HCT116 (cell line): ENCODE measurements at regions of chr7 and their contacts with region 1.

Region 1: GRCh38 chr7:75866489-75867389 is 12.1 kb upstream of the RHBDD2 start:
- DNase-seq: peak; percentile 48
- ATAC-seq: peak; percentile 94
- H3K4me3 ChIP-seq: no peak overlapping the region
- H3K27ac ChIP-seq: no peak overlapping the region
- H3K4me1 ChIP-seq: peaks cover 0 to 8% of the 10 kb centered on the region in 2 experiments; a peak in 2 of 4 replicates
- H3K27me3 ChIP-seq: no peaks in the 10 kb centered on the region
- CTCF ChIP-seq: peak; percentile 92 to 98 (median 92)
- POLR2A ChIP-seq: no peak
- RAD21 ChIP-seq: peak; percentile 99

Region 2: GRCh38 chr7:75611548-75612178 is 255.1 kb before region 1 on chr7:
- CTCF ChIA-PET with region 1: no interaction called
- POLR2A ChIA-PET with region 1: no interaction called
- RAD21 ChIA-PET with region 1: no interaction called
- intact Hi-C with region 1: no loop called
- DNase-seq: no peak
- ATAC-seq: 0 out of 2 replicates have a peak, but pooled peaks have one; percentile 34
- H3K4me3 ChIP-seq: no peak overlapping the region
- H3K27ac ChIP-seq: no peak overlapping the region
- H3K4me1 ChIP-seq: no peaks in the 10 kb centered on the region
- H3K27me3 ChIP-seq: no peaks in the 10 kb centered on the region
- CTCF ChIP-seq: no peak
- POLR2A ChIP-seq: no peak
- RAD21 ChIP-seq: no peak

Region 3: DNA sequence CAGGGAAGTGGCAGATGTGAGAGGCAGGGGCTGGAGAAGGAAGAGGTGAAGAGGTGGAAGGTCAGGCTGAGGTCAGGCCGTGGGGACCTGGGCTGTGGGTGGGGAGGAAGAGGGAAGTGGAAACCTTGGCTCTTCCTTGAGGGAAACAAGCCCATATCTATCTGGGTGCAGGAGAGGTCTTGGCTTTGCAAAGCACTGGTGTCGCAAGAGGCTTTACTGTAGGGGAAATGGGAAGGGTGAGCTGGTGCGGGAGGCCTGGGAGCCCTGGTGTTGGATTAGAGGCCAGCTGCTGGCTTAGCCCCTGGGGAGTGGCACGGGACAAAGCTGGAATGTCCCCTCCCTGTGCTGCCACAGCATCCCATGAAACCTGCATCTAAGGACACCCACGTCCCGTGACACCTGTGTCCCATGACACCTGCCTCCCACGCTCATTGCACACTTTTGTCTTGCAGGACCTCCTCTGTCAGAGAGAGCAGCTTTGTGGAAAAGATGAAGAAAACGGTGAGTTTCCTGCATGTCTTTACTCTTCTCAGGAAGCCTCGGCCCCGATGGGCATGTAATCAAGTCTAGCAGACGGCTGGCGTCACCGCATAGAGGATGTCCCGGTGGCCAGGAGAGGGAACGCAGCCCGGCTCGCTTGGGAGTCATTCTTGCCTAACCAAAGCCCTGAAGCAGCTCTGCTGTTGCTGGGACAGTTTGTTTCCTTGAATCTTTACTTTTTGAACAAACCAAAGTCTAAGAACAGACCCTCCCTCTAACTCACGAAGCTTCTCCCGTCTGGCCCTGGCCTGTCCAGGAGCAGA is 105.4 kb after region 1 on chr7:
- CTCF ChIA-PET with region 1: interaction called, 10 read pairs
- POLR2A ChIA-PET with region 1: no interaction called
- RAD21 ChIA-PET with region 1: no interaction called
- intact Hi-C with region 1: no loop called
- DNase-seq: no peak
- ATAC-seq: peak; percentile 79
- H3K4me3 ChIP-seq: no peak overlapping the region
- H3K27ac ChIP-seq: no peak overlapping the region
- H3K4me1 ChIP-seq: no peaks in the 10 kb centered on the region
- H3K27me3 ChIP-seq: no peaks in the 10 kb centered on the region
- CTCF ChIP-seq: peak in 2 of 3 experiments; percentile 12 to 43; a peak in 2 of 6 replicates
- POLR2A ChIP-seq: no peak
- RAD21 ChIP-seq: no peak